ENCODE measurements at regions of chr2 and their contacts with region 1.

Region 1: DNA sequence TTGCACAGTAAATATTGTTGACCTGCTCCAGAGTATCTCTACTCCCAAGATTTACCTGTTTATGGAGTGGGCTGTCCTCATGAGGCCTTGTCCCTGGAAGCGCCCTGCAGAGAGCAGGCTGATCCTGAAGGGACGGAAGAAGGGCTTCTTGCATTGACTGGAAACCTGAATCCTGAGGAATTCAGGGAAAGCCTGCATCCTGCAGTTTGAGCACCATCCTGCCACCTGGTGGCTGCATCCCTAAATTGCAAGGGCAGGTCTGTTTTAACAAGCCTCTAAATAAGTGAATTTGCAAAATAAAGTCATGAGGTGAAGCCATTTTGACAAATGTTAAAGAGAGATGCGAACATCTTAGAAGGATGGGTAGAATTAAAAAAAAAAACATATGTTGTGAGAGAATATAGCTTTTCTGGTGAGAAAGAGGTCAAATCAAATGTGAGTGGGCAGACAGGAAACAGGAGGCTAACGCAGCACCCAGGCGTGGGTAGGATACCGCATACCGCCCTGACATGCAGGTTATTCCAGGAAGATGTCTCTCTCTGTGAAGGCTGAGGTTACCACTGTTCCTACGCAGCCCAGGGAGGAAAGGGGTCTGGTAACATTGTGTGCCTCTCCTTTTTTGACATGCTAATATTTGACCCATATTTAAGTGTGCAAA is 754.9 kb downstream of the RNF144A start:
- DNase-seq: peak; percentile 18 to 78 (median 47)
- ATAC-seq: peak; percentile 64
- H3K4me3 ChIP-seq: peak overlapping the region in 1 of 2 experiments; percentile 0
- H3K4me3 Mint-ChIP-seq: peak overlapping the region; percentile 57
- H3K27ac ChIP-seq: peak overlapping the region; percentile 4 to 42
- H3K27ac Mint-ChIP-seq: peak overlapping the region; percentile 95
- H3K4me1 ChIP-seq: peaks cover 29% of the 10 kb centered on the region
- H3K4me1 Mint-ChIP-seq: peaks cover 39% of the 10 kb centered on the region
- H3K27me3 ChIP-seq: no peaks in the 10 kb centered on the region
- H3K27me3 Mint-ChIP-seq: no peaks in the 10 kb centered on the region
- CTCF ChIP-seq: peak; percentile 61

Region 2: DNA sequence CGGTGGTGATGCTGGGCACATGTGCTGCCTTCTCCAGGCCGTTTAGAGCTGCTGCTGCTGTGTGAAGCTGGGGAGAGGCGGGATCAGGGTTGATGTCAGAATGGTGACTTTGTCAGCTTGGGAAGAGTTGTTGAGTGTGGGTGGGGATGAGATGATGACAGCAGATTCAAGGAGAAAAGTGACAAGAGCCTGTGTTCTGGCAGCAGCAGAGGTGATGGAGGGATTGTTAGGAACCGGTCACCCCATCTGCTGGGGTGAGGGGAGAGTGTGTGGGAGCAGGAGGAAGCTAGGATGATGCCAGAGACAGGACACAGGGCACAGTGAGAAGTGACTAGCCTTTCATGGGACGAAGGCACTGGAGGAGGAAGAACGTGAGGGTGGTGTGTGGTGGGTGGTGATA is 409.4 kb before region 1 on chr2:
- CTCF ChIA-PET with region 1: no interaction called
- POLR2A ChIA-PET with region 1: no interaction called
- intact Hi-C with region 1: no loop called
- DNase-seq: no peak
- ATAC-seq: no peak
- H3K4me3 ChIP-seq: no peak overlapping the region
- H3K4me3 Mint-ChIP-seq: no peak overlapping the region
- H3K27ac ChIP-seq: no peak overlapping the region
- H3K27ac Mint-ChIP-seq: no peak overlapping the region
- H3K4me1 ChIP-seq: no peaks in the 10 kb centered on the region
- H3K4me1 Mint-ChIP-seq: peaks cover 8% of the 10 kb centered on the region
- H3K27me3 ChIP-seq: no peaks in the 10 kb centered on the region
- H3K27me3 Mint-ChIP-seq: no peaks in the 10 kb centered on the region
- CTCF ChIP-seq: no peak

Region 3: GRCh38 chr2:7517088-7517487 is 155.1 kb before region 1 on chr2:
- CTCF ChIA-PET with region 1: no interaction called
- POLR2A ChIA-PET with region 1: no interaction called
- intact Hi-C with region 1: loop called in 1 of 2 experiments (anchors 5 kb)
- DNase-seq: peak in 8 of 9 experiments; percentile 4 to 83 (median 50)
- ATAC-seq: peak; percentile 95
- H3K4me3 ChIP-seq: peak overlapping the region in 1 of 2 experiments; percentile 23
- H3K4me3 Mint-ChIP-seq: peak overlapping the region; percentile 69
- H3K27ac ChIP-seq: peak overlapping the region; percentile 44 to 61
- H3K27ac Mint-ChIP-seq: peak overlapping the region; percentile 93
- H3K4me1 ChIP-seq: peaks cover 48% of the 10 kb centered on the region
- H3K4me1 Mint-ChIP-seq: peaks cover 58% of the 10 kb centered on the region
- H3K27me3 ChIP-seq: no peaks in the 10 kb centered on the region
- H3K27me3 Mint-ChIP-seq: no peaks in the 10 kb centered on the region
- CTCF ChIP-seq: no peak

Region 4: DNA sequence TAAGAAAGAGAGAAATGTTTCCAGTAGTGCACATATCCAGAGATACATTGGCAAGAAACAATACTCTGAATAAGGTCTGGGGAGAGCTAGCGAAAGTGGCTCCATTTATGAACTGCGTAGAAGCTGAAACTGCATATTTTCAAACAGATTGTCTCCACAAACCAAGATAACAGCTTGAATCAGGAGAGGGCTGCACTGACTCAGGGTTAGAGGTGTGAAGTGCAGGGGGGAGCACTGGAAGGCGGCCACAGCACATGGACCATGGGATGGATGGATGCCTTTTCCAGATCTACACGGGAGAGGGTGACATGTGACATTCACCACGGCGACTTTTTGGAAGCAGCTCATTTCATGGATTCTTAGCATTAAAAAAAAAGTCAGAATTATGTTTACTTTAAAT is 25.5 kb before region 1 on chr2:
- CTCF ChIA-PET with region 1: interaction called, 10 read pairs
- POLR2A ChIA-PET with region 1: interaction called, 6 read pairs
- intact Hi-C with region 1: no loop called
- DNase-seq: no peak
- ATAC-seq: no peak
- H3K4me3 ChIP-seq: no peak overlapping the region
- H3K4me3 Mint-ChIP-seq: no peak overlapping the region
- H3K27ac ChIP-seq: no peak overlapping the region
- H3K27ac Mint-ChIP-seq: peak overlapping the region; percentile 39
- H3K4me1 ChIP-seq: peaks cover 30% of the 10 kb centered on the region
- H3K4me1 Mint-ChIP-seq: peaks cover 48% of the 10 kb centered on the region
- H3K27me3 ChIP-seq: no peaks in the 10 kb centered on the region
- H3K27me3 Mint-ChIP-seq: no peaks in the 10 kb centered on the region
- CTCF ChIP-seq: no peak

Region 5: DNA sequence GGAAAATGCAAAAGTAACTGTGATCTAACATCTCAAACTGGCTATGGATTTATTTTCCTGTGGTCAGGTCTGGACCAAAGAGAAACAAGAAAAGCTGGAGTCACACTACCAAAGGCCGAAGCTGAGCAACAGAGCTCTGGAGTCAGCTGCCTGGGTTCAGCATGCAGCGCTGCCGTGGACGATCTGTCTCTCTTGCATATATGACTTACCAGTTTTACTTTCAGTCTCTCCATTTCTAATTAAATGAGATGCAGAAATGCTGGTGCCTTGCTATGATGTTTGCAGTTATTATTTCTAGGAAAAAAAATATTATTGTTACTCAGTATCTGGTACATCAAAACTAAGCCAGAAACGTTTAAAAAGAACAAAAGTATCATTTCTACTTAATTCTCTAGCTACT is 58.3 kb after region 1 on chr2:
- CTCF ChIA-PET with region 1: interaction called, 3 read pairs
- POLR2A ChIA-PET with region 1: interaction called, 3 read pairs
- intact Hi-C with region 1: loop called in 1 of 2 experiments (anchors 5 kb)
- DNase-seq: peak in 4 of 9 experiments; percentile 33 to 63 (median 44)
- ATAC-seq: peak; percentile 37
- H3K4me3 ChIP-seq: peak overlapping the region; percentile 41 to 58
- H3K4me3 Mint-ChIP-seq: peak overlapping the region; percentile 90
- H3K27ac ChIP-seq: peak overlapping the region; percentile 51 to 77
- H3K27ac Mint-ChIP-seq: peak overlapping the region; percentile 98
- H3K4me1 ChIP-seq: peaks cover 24% of the 10 kb centered on the region
- H3K4me1 Mint-ChIP-seq: peaks cover 74% of the 10 kb centered on the region
- H3K27me3 ChIP-seq: no peaks in the 10 kb centered on the region
- H3K27me3 Mint-ChIP-seq: no peaks in the 10 kb centered on the region
- CTCF ChIP-seq: no peak

Measured in CD8-positive, alpha-beta T cell (primary cell).